ENCODE measurements at regions of chr9 and their contacts with region 1.

Region 1: DNA sequence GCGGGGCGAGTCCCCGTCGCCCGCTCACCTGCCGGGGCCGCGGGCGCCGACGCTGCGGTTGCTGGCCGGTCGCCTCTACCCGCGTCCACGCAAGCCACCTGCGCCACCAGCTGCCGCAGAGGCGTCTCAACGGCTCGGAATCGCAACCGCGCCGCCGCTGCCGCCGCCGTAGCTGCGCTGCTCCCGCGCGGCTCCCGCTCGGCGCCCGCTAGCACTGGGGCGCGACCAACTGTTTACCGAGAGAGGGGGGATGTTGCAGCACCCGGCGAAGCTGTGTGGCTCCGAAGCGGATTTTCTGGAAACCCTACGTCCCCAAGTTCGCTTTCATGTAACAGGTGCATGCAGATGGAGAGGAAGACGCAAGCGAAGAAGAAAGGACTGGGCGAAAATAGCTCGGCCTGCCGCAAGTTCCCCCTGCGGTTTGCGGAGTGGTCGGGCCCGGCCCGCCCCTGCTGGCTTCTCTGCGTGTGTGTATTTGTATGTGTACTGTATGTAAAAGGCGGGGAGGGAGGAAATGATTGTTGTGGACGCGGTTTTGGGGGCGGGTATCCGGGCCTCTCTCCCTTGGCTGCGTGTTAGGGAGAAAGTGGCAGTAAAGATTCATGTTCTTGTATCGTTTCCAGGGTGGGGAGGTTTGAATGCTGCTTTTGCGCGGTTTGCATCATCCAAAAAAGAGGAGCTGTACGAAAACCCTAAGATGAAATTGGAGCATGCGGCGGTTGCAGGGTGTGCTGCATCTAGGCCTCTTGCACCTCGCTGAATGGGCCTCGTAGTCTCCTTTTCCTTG is at the start of gene PSIP1:
- DNase-seq: peak; percentile 85
- CTCF ChIP-seq: no peak

Region 2: DNA sequence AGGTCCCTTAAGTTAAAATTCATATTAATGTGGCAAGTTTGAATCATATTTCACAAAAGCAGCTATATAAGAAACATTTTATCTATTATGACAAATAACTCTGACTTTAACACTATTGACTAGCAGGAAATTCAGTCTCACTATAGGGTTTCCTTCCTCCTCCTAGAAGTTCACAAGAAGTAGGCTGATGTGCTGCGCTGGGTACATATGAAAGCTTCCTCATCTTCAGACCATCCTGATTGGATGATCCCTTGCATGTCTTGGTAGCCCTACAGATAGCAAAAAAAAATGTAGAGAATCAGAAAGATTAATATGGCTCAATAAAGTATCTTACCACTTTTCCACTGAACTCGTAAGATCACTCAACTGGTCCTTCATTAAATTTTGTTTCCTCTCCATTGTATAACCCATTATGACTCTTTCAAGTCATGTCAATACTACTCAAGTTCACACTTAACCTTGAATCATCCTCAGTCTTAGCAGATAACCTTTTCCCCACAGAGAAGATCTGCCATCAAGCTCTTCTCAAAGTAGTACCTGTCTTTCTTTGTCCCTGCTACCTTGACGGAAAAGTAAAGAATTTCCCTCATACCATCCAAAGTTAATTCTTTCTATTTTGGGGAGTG is 11.3 kb after region 1 on chr9:
- CTCF ChIA-PET with region 1: interaction called, 26 read pairs
- POLR2A ChIA-PET with region 1: no interaction called
- DNase-seq: no peak
- CTCF ChIP-seq: no peak